ENCODE measurements at regions of chr16 and their contacts with region 1.

Region 1: DNA sequence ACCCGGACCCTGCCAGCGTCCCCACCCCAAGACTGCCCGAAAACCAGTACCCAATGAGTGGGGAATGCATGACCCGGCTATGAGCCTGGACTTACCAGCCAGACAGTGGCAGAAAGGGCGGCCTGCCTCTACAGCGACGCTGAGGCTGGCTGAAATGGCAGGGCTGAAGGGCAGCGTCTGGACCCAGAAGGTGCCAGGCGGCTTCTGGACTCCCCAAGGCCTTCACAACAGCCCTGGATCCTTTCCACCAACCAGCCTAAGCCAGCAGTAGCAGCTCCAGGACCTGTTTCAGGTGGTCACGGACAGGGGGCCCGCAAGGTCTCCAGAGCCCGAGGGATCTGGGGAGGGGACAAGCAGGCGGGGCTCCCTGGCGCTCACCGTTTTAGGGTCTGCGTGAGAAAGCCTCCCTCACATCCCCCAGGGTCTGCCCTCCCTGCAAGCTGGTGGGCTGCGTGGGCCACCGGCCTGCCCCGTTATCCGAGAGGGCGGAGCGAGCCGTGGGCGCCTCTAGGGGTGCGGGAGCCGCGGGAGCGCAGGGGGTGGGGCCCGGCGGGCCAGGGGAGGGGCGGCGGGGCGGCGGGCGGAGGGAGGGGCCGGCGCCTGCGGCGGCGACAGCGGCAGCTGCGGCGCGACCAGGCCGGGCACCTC is at the start of gene RIPOR1:
- DNase-seq: peak; percentile 53 to 54
- H3K4me3 ChIP-seq: peak within 1 kb of the TSS; percentile 38 to 73 (median 70)
- H3K27ac ChIP-seq: peak within 1 kb of the TSS; percentile 72 to 88 (median 80)
- H3K4me1 ChIP-seq: peaks cover 31 to 36% of the 10 kb centered on the region in 2 donors
- H3K27me3 ChIP-seq: no peaks in the 10 kb centered on the region
- CTCF ChIP-seq: peak in 2 of 6 experiments; percentile 1 to 10
- POLR2A ChIP-seq: no peak
- total RNA-seq, gene RIPOR1: 21.3 to 57.1 (median 41.2) TPM

Region 2: GRCh38 chr16:67561824-67562525 is 33.6 kb after region 1 on chr16:
- intact Hi-C with region 1: loop called (anchors 5 kb)
- DNase-seq: peak; percentile 96 to 97
- H3K4me3 ChIP-seq: peak overlapping the region; percentile 2 to 86 (median 37)
- H3K27ac ChIP-seq: peak overlapping the region; percentile 82 to 98 (median 94)
- H3K4me1 ChIP-seq: peaks cover 11 to 27% of the 10 kb centered on the region in 2 donors
- H3K27me3 ChIP-seq: no peaks in the 10 kb centered on the region
- CTCF ChIP-seq: no peak
- POLR2A ChIP-seq: peak in 1 of 2 donors; percentile 76

Measured in thyroid gland (tissue), 4 donors.